ENCODE measurements at regions of chr18 and their contacts with region 1.

Region 1: DNA sequence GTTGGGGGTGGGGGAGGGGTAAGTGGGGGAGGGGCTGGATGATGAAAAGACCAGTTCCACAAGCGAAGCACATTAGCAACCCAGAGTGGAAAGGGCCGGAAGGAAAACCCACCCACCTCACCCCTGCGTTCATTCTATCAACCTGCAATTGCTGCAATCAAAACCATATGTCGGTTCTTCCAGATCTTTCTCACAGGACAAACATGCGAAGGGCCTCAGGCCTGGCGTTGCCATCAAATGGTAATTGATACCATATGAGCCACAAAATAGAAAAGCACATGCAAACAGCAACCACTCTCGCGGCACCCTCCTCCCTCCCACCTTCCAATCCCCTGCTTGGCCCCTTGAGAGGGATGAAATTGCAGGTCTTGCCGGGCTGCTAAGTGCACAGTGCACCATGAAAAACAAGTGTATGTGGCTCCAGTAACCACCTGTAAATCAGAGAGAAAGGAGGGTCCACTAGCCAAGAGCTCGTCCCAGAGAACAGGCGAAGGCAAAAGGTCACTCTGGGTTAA is 287.5 kb downstream of the TCF4 start:
- DNase-seq: no peak
- ATAC-seq: peak in 1 of 4 donors; percentile 11
- H3K4me3 ChIP-seq: peak overlapping the region in 6 of 12 donors; percentile 0 to 34 (median 16)
- H3K27ac ChIP-seq: peak overlapping the region in 7 of 12 donors; percentile 3 to 38 (median 25)
- H3K4me1 ChIP-seq: peaks cover 0 to 89% (median 52%) of the 10 kb centered on the region in 12 donors
- H3K27me3 ChIP-seq: no peaks in the 10 kb centered on the region
- CTCF ChIP-seq: no peak
- POLR2A ChIP-seq: no peak

Region 2: GRCh38 chr18:55284614-55285013 is 15.9 kb before region 1 on chr18:
- intact Hi-C with region 1: loop called in 1 of 10 experiments (anchors 2 kb)
- DNase-seq: no peak
- ATAC-seq: peak in 3 of 4 donors; percentile 38 to 78 (median 74)
- H3K4me3 ChIP-seq: no peak overlapping the region
- H3K27ac ChIP-seq: no peak overlapping the region
- H3K4me1 ChIP-seq: peaks cover 0 to 83% (median 36%) of the 10 kb centered on the region in 12 donors
- H3K27me3 ChIP-seq: no peaks in the 10 kb centered on the region
- CTCF ChIP-seq: no peak
- POLR2A ChIP-seq: no peak

Region 3: GRCh38 chr18:55433648-55434047 is 133.2 kb after region 1 on chr18:
- intact Hi-C with region 1: no loop called
- DNase-seq: no peak
- ATAC-seq: no peak
- H3K4me3 ChIP-seq: no peak overlapping the region
- H3K27ac ChIP-seq: no peak overlapping the region
- H3K4me1 ChIP-seq: peaks cover 0 to 52% (median 20%) of the 10 kb centered on the region in 12 donors
- H3K27me3 ChIP-seq: no peaks in the 10 kb centered on the region
- CTCF ChIP-seq: no peak
- POLR2A ChIP-seq: no peak